Astrocyte of the cerebellum (primary cell): ENCODE measurements at regions of chr1 and their contacts with region 1.

Region 1: GRCh38 chr1:171984850-171985485 is 143.7 kb downstream of the DNM3 start:
- DNase-seq: no peak
- H3K4me3 ChIP-seq: no peak overlapping the region
- CTCF ChIP-seq: peak; percentile 82

Region 2: DNA sequence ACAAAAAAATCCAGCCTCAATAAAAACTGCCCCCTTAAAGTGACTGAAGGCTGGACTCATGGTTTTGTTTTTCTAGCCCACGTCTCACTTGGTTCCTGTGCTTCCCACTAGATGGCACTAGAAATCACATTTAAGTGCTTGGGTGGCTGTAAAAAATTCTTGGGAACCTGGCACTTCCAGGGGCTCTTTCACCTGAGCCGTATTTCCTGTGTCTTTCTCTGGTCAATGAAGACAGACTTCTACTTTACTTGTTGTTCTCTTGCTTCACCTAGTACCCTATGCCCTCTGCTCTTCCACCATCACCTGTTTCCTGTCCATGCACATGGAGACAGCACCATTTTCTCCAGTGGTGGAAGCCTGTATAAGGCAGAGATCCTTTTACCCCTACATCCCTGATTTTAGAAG is 183.5 kb before region 1 on chr1:
- in situ Hi-C with region 1: loop called (anchors 5 kb)
- DNase-seq: peak; percentile 40
- H3K4me3 ChIP-seq: no peak overlapping the region
- CTCF ChIP-seq: peak; percentile 82

Region 3: DNA sequence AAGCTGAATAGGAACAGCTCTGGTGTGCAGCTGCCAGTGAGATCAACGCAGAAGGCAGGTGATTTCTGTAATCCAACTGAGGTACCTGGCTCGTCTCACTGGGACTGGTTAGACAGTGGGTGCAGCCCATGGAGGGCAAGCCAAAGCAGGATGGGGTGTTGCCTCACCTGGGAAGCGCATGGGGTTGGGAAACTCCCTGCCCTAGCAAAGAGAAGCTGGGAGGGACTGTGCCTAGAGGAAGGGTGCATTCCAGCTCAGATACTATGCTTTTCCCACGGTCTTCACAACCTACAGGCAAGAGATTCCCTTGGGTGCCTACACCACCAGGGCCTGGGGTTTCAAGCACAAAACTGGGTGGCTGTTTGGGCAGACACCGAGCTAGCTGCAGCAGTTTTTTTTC is 39.5 kb after region 1 on chr1:
- in situ Hi-C with region 1: no loop called
- DNase-seq: no peak
- H3K4me3 ChIP-seq: no peak overlapping the region
- CTCF ChIP-seq: no peak